Activated CD4-positive, alpha-beta T cell treated with anti-CD3 and anti-CD28 coated beads, Interleukin-2, amount 10 ng/mL, durations not matched to agents 24 days and 14 days (primary cell): ENCODE measurements at regions of chr1 and their contacts with region 1.

Region 1: GRCh38 chr1:101178688-101179491 is 57.9 kb upstream of the S1PR1 start:
- DNase-seq: peak; percentile 82
- H3K4me3 Mint-ChIP-seq: peak overlapping the region; percentile 77
- H3K27ac Mint-ChIP-seq: peak overlapping the region; percentile 98
- H3K4me1 Mint-ChIP-seq: peaks cover 59% of the 10 kb centered on the region
- H3K27me3 Mint-ChIP-seq: no peaks in the 10 kb centered on the region

Region 2: DNA sequence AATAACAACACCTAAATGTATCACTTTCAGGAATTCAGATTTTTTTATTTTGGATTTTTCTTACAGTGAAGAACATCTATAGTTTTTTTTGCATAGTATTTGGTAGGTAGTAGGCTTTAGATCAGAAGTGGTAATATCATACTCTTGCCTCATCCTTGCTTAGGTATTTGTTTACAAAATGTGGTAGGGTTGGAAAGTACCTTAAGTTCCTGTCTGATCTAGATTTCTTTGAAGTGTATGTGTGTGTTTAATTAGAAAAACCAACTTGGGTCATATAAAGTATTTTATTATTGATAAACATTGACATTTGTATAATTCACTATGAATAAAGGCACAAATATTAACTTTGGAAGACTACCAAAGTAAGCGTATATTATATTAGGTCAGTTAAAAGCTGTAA is 726.2 kb before region 1 on chr1:
- intact Hi-C with region 1: loop called (anchors 5 kb)
- DNase-seq: peak; percentile 65
- H3K4me3 Mint-ChIP-seq: peak overlapping the region; percentile 35
- H3K27ac Mint-ChIP-seq: peak overlapping the region; percentile 83
- H3K4me1 Mint-ChIP-seq: peaks cover 63% of the 10 kb centered on the region
- H3K27me3 Mint-ChIP-seq: no peaks in the 10 kb centered on the region

Region 3: GRCh38 chr1:100941098-100941527 is 237.8 kb before region 1 on chr1:
- intact Hi-C with region 1: loop called (anchors 1 kb)
- DNase-seq: peak; percentile 71
- H3K4me3 Mint-ChIP-seq: peak overlapping the region; percentile 67
- H3K27ac Mint-ChIP-seq: peak overlapping the region; percentile 98
- H3K4me1 Mint-ChIP-seq: peaks cover 36% of the 10 kb centered on the region
- H3K27me3 Mint-ChIP-seq: peaks cover 2% of the 10 kb centered on the region

Region 4: GRCh38 chr1:101081496-101082488 is 97.1 kb before region 1 on chr1:
- intact Hi-C with region 1: loop called (anchors 5 kb)
- DNase-seq: peak; percentile 88
- H3K4me3 Mint-ChIP-seq: peak overlapping the region; percentile 44
- H3K27ac Mint-ChIP-seq: peak overlapping the region; percentile 76
- H3K4me1 Mint-ChIP-seq: peaks cover 38% of the 10 kb centered on the region
- H3K27me3 Mint-ChIP-seq: no peaks in the 10 kb centered on the region

Region 5: DNA sequence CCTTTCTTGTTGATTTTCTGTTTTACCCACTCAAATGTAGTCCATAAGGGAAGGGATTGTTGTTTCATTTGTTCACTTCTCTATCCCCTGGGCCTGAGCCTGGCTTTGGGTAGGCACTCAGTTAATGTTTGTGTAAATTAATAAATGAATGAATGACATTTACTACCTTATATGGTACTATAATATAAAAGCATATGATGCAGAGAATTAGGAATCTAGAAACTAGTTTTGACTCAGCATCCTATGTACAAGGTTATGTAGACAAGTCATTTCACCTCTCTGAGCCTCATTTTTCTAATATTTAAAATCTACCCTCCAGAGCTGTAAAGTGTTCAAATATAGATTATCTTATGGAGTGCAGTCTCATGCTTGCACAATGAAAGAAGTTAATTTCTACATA is 11.0 kb before region 1 on chr1:
- intact Hi-C with region 1: loop called (anchors 1 kb)
- DNase-seq: no peak
- H3K4me3 Mint-ChIP-seq: no peak overlapping the region
- H3K27ac Mint-ChIP-seq: no peak overlapping the region
- H3K4me1 Mint-ChIP-seq: peaks cover 19% of the 10 kb centered on the region
- H3K27me3 Mint-ChIP-seq: no peaks in the 10 kb centered on the region

Region 6: GRCh38 chr1:101451888-101452287 is 273.0 kb after region 1 on chr1:
- intact Hi-C with region 1: loop called (anchors 2 kb)
- DNase-seq: peak; percentile 55
- H3K4me3 Mint-ChIP-seq: no peak overlapping the region
- H3K27ac Mint-ChIP-seq: peak overlapping the region; percentile 23
- H3K4me1 Mint-ChIP-seq: peaks cover 29% of the 10 kb centered on the region
- H3K27me3 Mint-ChIP-seq: peaks cover 19% of the 10 kb centered on the region

Region 7: GRCh38 chr1:101603726-101604125 is 424.8 kb after region 1 on chr1:
- intact Hi-C with region 1: no loop called
- DNase-seq: no peak
- H3K4me3 Mint-ChIP-seq: no peak overlapping the region
- H3K27ac Mint-ChIP-seq: no peak overlapping the region
- H3K4me1 Mint-ChIP-seq: peaks cover 1% of the 10 kb centered on the region
- H3K27me3 Mint-ChIP-seq: peaks cover 8% of the 10 kb centered on the region